ENCODE measurements at regions of chr11 and their contacts with region 1.

Region 1: GRCh38 chr11:32893343-32894148 is 935 bp downstream of the QSER1 start:
- DNase-seq: peak in 6 of 9 donors; percentile 34 to 67 (median 42)
- ATAC-seq: peak; percentile 47
- H3K4me3 ChIP-seq: peak overlapping the region; percentile 71
- H3K4me3 Mint-ChIP-seq: peak overlapping the region; percentile 83 to 96 (median 94)
- H3K27ac ChIP-seq: peak overlapping the region; percentile 71
- H3K27ac Mint-ChIP-seq: peak overlapping the region; percentile 58 to 95 (median 80)
- H3K4me1 ChIP-seq: peaks cover 5 to 15% of the 10 kb centered on the region in 2 donors
- H3K4me1 Mint-ChIP-seq: peaks cover 26 to 46% (median 38%) of the 10 kb centered on the region in 7 donors
- H3K27me3 ChIP-seq: no peaks in the 10 kb centered on the region
- H3K27me3 Mint-ChIP-seq: peaks cover 0 to 21% (median 0%) of the 10 kb centered on the region in 5 donors

Region 2: GRCh38 chr11:32583459-32584271 is 309.9 kb before region 1 on chr11 and contains the start of gene EIF3M:
- CTCF ChIA-PET with region 1: no interaction called
- POLR2A ChIA-PET with region 1: no interaction called
- intact Hi-C with region 1: loop called (anchors 1 to 5 kb)
- DNase-seq: peak; percentile 90 to 95 (median 94)
- ATAC-seq: peak; percentile 100
- H3K4me3 ChIP-seq: peak within 1 kb of the TSS; percentile 87
- H3K4me3 Mint-ChIP-seq: peak within 1 kb of the TSS; percentile 93 to 99 (median 97)
- H3K27ac ChIP-seq: peak within 1 kb of the TSS; percentile 96
- H3K27ac Mint-ChIP-seq: peak within 1 kb of the TSS; percentile 94 to 99 (median 97)
- H3K4me1 ChIP-seq: peaks cover 27 to 28% of the 10 kb centered on the region in 2 donors
- H3K4me1 Mint-ChIP-seq: peaks cover 25 to 52% (median 44%) of the 10 kb centered on the region in 7 donors
- H3K27me3 ChIP-seq: no peaks in the 10 kb centered on the region
- H3K27me3 Mint-ChIP-seq: no peaks in the 10 kb centered on the region
- total RNA-seq, gene EIF3M: 210 to 250 (median 236) TPM

Region 3: GRCh38 chr11:32870676-32871075 is 22.9 kb before region 1 on chr11:
- CTCF ChIA-PET with region 1: no interaction called
- POLR2A ChIA-PET with region 1: no interaction called
- intact Hi-C with region 1: loop called in 1 of 2 experiments (anchors 1 kb)
- DNase-seq: peak in 5 of 9 donors; percentile 11 to 32 (median 14)
- ATAC-seq: peak; percentile 52
- H3K4me3 ChIP-seq: no peak overlapping the region
- H3K4me3 Mint-ChIP-seq: peak overlapping the region in 1 of 10 donors; percentile 36
- H3K27ac ChIP-seq: no peak overlapping the region
- H3K27ac Mint-ChIP-seq: no peak overlapping the region
- H3K4me1 ChIP-seq: no peaks in the 10 kb centered on the region
- H3K4me1 Mint-ChIP-seq: no peaks in the 10 kb centered on the region
- H3K27me3 ChIP-seq: no peaks in the 10 kb centered on the region
- H3K27me3 Mint-ChIP-seq: peaks cover 6 to 35% (median 22%) of the 10 kb centered on the region in 5 donors

Region 4: GRCh38 chr11:33039274-33040032 is 145.9 kb after region 1 on chr11 and contains the start of gene TCP11L1:
- CTCF ChIA-PET with region 1: no interaction called
- POLR2A ChIA-PET with region 1: no interaction called
- intact Hi-C with region 1: loop called (anchors 1 kb)
- DNase-seq: peak; percentile 57 to 88 (median 76)
- ATAC-seq: peak; percentile 93
- H3K4me3 ChIP-seq: peak within 1 kb of the TSS; percentile 100
- H3K4me3 Mint-ChIP-seq: peak within 1 kb of the TSS; percentile 91 to 97 (median 94)
- H3K27ac ChIP-seq: peak within 1 kb of the TSS; percentile 82
- H3K27ac Mint-ChIP-seq: peak within 1 kb of the TSS; percentile 77 to 95 (median 92)
- H3K4me1 ChIP-seq: peaks cover 3 to 9% of the 10 kb centered on the region in 2 donors
- H3K4me1 Mint-ChIP-seq: peaks cover 0 to 17% (median 14%) of the 10 kb centered on the region in 7 donors
- H3K27me3 ChIP-seq: no peaks in the 10 kb centered on the region
- H3K27me3 Mint-ChIP-seq: peaks cover 0 to 17% (median 0%) of the 10 kb centered on the region in 5 donors
- total RNA-seq, gene TCP11L1: 9.1 to 17.1 (median 13.3) TPM

Region 5: DNA sequence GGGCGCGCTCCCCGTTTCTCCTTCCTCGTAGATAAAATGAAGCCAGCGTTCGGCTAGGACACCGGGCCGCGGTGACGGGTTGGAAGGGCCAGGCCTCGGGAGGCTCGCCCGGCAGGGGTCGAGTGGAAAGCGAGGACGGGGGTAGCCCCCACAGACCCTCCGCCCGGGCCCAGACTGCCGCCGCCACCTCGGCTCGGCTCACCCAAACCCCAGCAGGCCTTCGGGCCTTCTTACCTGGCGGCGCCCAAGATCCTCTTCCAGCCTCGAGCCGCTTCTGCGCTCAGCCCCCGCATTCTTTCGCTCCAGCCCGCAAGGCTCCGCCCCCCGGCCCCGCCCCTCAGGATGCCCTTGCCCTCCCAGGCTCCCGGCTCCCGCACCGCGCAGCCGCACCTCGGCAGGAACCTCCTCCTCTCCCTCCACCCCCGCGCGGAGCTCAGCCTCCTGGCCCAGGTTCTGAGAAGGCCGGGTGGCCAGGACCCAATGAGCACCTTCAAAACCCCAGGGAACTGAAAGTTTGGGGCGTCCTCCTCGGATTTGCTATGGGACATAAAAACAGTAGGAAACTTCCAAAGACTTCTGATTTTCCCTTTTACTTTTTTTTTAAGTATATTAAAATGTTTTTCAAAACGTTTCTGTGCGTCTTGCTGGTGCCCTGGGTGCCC is 842.7 kb after region 1 on chr11 and contains the start of gene CD59:
- CTCF ChIA-PET with region 1: no interaction called
- POLR2A ChIA-PET with region 1: interaction called, 3 read pairs
- intact Hi-C with region 1: loop called in 1 of 2 experiments (anchors 5 kb)
- DNase-seq: peak; percentile 75 to 94 (median 85)
- ATAC-seq: peak; percentile 92
- H3K4me3 ChIP-seq: peak within 1 kb of the TSS; percentile 76
- H3K4me3 Mint-ChIP-seq: peak within 1 kb of the TSS; percentile 87 to 97 (median 92)
- H3K27ac ChIP-seq: peak within 1 kb of the TSS; percentile 72
- H3K27ac Mint-ChIP-seq: peak within 1 kb of the TSS; percentile 79 to 94 (median 86)
- H3K4me1 ChIP-seq: peaks cover 9 to 17% of the 10 kb centered on the region in 2 donors
- H3K4me1 Mint-ChIP-seq: peaks cover 21 to 41% (median 36%) of the 10 kb centered on the region in 7 donors
- H3K27me3 ChIP-seq: no peaks in the 10 kb centered on the region
- H3K27me3 Mint-ChIP-seq: peaks cover 0 to 11% (median 0%) of the 10 kb centered on the region in 5 donors
- total RNA-seq, gene CD59: 23.3 to 152 (median 62.7) TPM

Measured in naive thymus-derived CD4-positive, alpha-beta T cell (primary cell).